Right ventricle myocardium superior (tissue), 1 donor: ENCODE measurements at regions of chr20 and their contacts with region 1.

Region 1: GRCh38 chr20:50169329-50169831 is 15.9 kb upstream of the PEDS1 start:
- DNase-seq: peak; percentile 87
- ATAC-seq: peak; percentile 19

Region 2: DNA sequence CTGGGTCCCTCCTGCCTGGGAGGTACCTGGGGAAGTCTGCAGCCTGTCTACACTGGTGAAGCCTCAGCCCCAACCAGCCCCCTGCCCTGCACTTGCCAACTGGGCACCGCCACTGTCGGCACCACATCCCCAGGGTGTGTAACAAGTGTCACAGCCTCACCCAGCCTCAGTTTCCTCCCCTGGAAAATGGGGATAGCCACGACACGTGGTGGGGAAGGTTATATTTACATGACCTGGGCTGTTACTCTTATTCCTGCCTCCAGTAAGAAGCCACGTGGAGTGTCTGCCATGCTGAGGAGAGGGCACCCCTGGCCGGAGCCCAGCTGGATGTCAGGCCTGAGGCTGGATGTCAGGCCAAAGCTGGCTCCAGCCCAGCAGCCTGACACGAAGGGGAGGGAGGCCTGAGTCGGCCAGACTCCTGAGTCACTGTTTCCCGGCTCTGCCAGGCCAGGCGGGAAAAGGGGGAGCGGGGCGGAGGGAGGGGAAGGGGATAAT is 141.7 kb before region 1 on chr20:
- intact Hi-C with region 1: no loop called
- DNase-seq: peak; percentile 87
- ATAC-seq: peak; percentile 93

Region 3: DNA sequence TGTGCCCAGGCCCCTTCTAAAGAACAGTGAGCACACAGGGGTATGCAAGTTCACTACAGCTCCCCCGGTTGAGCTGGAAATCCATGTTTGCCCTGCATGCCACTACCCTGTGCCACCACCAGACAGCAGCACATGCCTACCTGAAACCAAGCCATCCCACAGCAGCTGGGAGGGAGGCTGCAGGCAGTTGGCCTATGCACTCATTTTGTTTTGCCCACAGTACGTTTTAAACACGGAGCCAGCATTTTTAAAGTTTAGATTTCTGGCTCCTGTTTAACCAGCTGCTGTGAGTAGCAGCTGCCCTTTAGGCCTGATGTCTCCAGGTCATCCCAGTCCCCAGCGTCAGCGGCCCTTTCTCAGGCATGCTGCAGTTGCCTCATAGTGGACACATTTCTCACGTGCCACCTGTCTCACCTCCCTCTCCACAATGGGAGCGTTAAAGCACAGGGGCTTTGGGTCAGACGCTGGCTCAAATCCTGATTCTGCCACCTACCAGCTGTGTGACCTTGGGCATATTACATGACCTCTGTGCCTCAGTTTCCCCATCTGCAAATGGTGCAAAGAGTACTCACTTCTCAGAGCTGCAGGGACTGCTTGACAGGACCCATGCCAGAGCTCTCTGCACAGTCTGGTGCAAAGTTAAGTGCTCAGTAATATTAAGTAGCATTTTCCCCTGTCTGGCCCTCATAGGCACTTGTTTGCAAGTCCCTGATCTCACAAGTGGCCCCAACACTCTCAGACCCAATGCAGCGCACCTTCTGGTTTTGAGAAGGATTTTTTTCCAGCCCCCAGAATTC is 48.3 kb before region 1 on chr20:
- intact Hi-C with region 1: loop called (anchors 2 kb)
- DNase-seq: peak; percentile 72
- ATAC-seq: peak; percentile 80

Region 4: DNA sequence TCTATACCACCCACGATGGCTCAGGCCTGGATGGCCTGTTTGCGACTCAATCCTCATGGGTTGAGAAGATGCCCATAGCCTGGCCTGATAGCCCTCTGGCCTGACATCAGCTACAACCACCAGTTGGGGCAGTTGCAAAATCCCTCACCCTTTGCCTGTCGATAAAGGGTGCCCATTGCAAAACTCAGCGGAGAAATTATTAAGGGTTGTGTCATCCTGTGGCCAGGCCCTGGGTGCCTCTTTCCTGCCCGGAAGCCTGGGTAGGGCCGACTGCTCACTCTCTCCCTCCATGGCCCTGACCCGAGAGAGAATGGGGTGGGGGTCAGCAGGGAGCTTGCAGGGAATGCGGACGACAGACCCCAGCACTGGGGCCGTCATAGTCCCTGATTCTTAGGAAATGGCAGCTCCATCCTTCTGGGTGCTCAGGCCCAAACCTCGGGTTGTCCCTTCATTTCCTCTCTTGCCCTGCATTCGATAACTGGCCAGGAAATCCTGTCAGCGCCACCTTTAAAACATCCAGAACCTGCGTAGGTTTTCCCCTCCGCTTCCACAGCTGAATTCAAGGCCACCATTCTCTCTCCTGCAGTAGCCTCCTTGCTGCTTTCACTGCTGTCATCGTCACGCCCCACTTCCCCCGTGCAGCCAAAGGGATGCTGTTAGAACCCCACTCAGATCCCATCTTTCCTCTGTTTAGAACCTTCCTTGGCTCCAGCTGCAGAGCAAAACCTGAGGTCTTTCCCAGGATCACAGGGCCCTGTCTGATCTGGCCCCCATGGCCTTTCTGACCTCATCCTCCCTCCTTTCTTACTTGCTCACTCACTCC is 52.3 kb after region 1 on chr20:
- intact Hi-C with region 1: no loop called
- DNase-seq: peak; percentile 61
- ATAC-seq: peak; percentile 50

Region 5: DNA sequence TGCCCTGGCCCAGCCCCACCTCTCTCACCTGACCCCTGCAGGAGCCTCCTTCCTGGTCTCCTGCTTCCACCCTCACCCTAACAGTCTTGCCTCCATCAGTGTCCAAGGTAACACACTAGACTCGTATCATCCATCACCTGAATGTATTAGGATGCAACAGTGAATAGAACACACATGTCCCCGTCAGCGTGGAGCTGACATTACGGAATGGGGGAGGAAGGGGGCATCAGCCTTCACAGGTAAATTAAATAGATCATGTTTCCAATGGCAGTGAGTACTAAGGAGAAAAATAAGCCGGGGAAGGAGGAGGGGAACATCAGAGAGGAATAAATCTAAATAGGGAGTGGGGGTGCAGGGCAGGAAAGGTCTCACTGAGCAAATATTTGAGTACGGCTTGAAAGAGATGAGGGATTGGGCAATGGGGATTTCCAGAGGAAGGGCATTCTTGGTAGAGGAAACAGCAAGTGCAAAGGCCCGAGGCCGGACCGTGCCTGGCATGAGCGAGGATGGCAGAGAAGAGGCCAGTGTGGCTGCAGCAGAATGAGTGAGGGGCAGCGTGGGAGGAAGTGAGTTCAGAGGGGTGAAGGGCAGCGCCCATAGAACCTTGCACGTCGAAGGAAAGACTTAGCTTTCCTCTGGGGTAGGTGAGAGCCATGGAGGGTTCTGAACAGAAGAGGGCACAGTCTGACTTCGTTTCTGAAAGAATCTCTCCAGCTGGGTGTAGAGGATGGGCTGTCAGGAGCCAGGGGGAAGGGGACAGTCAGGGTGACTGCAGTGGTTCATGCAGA is 230.7 kb after region 1 on chr20:
- intact Hi-C with region 1: no loop called
- DNase-seq: no peak
- ATAC-seq: peak; percentile 21